Head of caudate nucleus (tissue), 42 donors: ENCODE measurements at regions of chr7 and their contacts with region 1.

Region 1: GRCh38 chr7:82044497-82045080 is 274.7 kb upstream of the HGF start:
- DNase-seq: peak in 38 of 42 donors; percentile 5 to 87 (median 52)

Region 2: GRCh38 chr7:82521906-82522445 is 477.4 kb after region 1 on chr7:
- intact Hi-C with region 1: no loop called
- DNase-seq: no peak

Region 3: DNA sequence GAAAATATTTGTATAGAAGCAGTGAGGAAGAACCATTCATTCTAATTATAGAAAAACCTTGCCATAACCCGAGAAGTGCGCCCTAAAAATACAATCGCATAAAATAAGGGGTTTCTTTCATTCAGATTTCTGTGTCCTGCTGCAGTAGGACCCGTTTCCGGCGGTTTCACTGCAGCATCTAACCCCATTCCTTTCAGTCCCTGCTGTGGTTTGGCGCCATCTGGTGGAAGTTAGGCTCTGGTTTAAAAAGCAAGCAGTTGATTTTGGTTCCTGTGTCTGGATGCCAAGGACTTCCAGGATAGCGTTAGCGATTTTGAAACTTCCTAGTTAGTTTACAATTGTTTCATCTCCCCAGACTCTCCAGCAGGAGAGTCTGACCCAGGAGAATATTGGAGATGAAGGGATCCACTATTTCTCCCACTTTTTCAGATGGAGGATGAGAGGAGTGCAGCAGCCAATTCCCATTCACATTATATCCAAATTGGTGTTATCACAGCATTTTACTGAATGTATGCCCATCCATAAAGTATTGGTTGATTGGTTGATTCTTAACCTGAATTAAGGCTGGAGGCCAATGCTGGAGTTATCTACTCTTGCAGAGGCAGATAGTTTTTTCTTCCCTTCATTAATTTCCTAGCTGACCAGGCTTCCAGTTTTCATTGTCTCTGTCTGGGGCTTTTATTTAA is 527.7 kb after region 1 on chr7:
- intact Hi-C with region 1: loop called (anchors 5 kb)
- DNase-seq: peak; percentile 70 to 97 (median 90)